Posterior cingulate gyrus (tissue), 11 donors: ENCODE measurements at regions of chr19 and their contacts with region 1.

Region 1: GRCh38 chr19:55301459-55302317 is 17.9 kb downstream of the BRSK1 start:
- DNase-seq: peak; percentile 74 to 98 (median 88)

Region 2: DNA sequence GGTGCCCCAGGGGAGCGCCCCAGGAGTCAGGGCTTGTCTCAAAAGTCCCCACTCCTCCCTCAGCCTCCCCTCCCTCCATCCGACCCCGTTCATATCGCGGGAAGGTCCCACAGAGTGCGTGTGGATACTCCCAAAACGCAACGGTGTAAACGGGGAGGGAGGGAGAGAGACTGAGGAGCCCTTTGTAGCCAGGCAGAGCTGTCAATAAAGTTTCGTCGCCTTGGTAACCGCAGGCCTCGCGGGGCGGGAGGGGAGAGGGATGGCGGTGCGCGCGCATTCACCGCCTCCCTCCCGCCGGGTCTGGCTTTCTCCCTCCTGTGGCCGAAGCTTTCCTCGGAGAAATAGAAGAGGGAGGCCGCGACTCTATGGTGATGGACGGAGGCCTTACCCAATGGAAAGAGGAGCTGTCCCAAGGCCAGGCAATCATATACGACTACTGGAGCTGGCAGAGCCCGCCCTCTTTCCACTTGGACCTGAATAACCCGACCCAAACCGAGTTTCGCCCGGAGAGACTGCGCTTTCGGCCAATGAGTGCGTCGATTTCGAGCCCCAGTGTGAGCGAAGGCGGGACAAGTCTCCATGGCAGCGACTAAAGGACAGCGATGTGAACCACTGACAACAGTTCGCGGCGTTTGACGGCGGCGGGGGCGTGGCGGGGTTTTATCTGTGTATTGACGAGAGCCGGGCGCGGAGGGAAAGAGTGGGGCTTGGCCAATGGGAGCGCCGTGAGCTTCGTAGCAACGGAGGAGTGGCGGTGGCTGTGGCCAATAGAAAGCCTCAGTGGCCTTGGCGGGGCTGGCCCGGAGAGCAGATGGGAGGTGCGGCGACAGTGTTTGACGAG is 37.6 kb after region 1 on chr19 and contains the start of gene KMT5C:
- intact Hi-C with region 1: loop called (anchors 5 kb)
- DNase-seq: peak; percentile 100